ENCODE measurements at regions of chr17 and their contacts with region 1.

Region 1: DNA sequence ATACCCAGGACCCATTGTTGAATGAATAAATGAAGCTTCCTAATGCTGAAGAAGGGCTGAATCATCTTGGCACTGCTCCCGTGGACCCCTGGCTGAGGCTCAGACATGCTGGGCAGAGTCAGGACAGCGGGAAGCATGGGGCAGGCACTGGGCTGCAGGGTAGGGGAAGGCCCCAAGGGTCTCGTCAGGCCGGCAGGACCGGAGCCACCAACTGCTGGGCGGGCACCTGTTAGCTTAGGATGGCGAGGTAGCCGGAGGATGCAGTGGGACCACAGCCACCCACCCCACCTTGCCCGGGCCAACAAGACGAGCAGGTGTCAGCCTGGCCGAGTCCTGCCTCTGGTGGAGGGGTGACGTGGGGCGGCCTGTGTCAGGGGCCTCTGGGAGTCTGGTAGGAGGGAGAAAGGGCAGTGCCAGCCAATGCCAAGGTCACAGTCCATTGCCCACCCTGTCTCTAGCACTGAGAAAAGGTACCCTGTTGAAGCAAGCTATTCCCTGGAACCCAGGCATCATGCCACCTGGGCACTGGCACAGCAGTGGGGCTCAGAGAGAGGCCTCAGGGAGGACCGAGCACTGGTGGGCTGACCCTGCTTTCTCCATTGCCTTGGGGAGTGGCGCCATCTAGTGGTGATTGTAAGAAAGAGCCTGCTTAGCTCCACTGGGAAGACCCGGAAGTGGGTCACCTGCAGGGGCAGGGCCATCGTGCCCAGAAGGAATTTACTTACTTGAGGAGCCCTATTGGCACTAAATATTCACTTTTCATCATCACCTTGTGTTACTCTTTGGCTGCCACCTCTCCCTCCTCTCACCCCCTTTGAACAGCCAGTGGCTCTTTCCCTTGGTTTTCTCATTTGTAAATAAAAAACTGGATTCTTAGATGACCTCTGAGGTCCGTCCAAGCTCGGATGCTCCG is 3.0 kb upstream of the DLX3 start:
- DNase-seq: peak; percentile 79 to 91 (median 80)
- ATAC-seq: peak; percentile 79
- H3K4me3 ChIP-seq: no peak overlapping the region
- H3K27ac ChIP-seq: no peak overlapping the region
- H3K4me1 ChIP-seq: peaks cover 10 to 37% of the 10 kb centered on the region in 2 donors
- H3K27me3 ChIP-seq: peaks cover 52 to 95% of the 10 kb centered on the region in 2 donors
- CTCF ChIP-seq: peak; percentile 95 to 96

Region 2: GRCh38 chr17:49861150-49861892 is 136.7 kb before region 1 on chr17:
- intact Hi-C with region 1: loop called in 1 of 2 experiments (anchors 5 kb)
- DNase-seq: peak in 1 of 4 donors; percentile 51
- ATAC-seq: peak; percentile 75
- H3K4me3 ChIP-seq: no peak overlapping the region
- H3K27ac ChIP-seq: no peak overlapping the region
- H3K4me1 ChIP-seq: peaks cover 0 to 3% of the 10 kb centered on the region in 2 donors
- H3K27me3 ChIP-seq: peaks cover 0 to 24% of the 10 kb centered on the region in 2 donors
- CTCF ChIP-seq: peak; percentile 70 to 75

Region 3: GRCh38 chr17:49880291-49881053 is 117.6 kb before region 1 on chr17:
- intact Hi-C with region 1: loop called in 1 of 2 experiments (anchors 5 kb)
- DNase-seq: peak; percentile 65 to 94 (median 76)
- ATAC-seq: peak; percentile 98
- H3K4me3 ChIP-seq: no peak overlapping the region
- H3K27ac ChIP-seq: no peak overlapping the region
- H3K4me1 ChIP-seq: peaks cover 6 to 9% of the 10 kb centered on the region in 2 donors
- H3K27me3 ChIP-seq: peaks cover 16 to 59% of the 10 kb centered on the region in 2 donors
- CTCF ChIP-seq: peak; percentile 97 to 99

Region 4: GRCh38 chr17:50114849-50115357 is 116.9 kb after region 1 on chr17:
- intact Hi-C with region 1: no loop called
- DNase-seq: no peak
- ATAC-seq: peak; percentile 46
- H3K4me3 ChIP-seq: no peak overlapping the region
- H3K27ac ChIP-seq: no peak overlapping the region
- H3K4me1 ChIP-seq: peaks cover 13 to 17% of the 10 kb centered on the region in 2 donors
- H3K27me3 ChIP-seq: peaks cover 9 to 51% of the 10 kb centered on the region in 2 donors
- CTCF ChIP-seq: peak; percentile 34 to 46